ENCODE measurements at regions of chr1 and their contacts with region 1.

Region 1: GRCh38 chr1:206955476-206956451 is 9.5 kb upstream of the PIGR start:
- DNase-seq: no peak
- ATAC-seq: peak; percentile 78
- H3K4me3 ChIP-seq: no peak overlapping the region
- H3K27ac ChIP-seq: peak overlapping the region; percentile 38
- H3K4me1 ChIP-seq: peaks cover 44% of the 10 kb centered on the region
- H3K27me3 ChIP-seq: no peaks in the 10 kb centered on the region
- CTCF ChIP-seq: no peak
- EP300 ChIP-seq: no peak
- POLR2A ChIP-seq: no peak
- RAD21 ChIP-seq: 0 out of 2 replicates have a peak, but pooled peaks have one; percentile 2

Region 2: GRCh38 chr1:206930210-206930798 is 25.5 kb before region 1 on chr1:
- CTCF ChIA-PET with region 1: interaction called, 44 read pairs
- POLR2A ChIA-PET with region 1: interaction called, 13 read pairs
- RAD21 ChIA-PET with region 1: interaction called, 9 read pairs
- SMC1A ChIA-PET with region 1: interaction called, 15 read pairs
- in situ Hi-C with region 1: no loop called
- intact Hi-C with region 1: no loop called
- DNase-seq: peak; percentile 96
- ATAC-seq: peak; percentile 86
- H3K4me3 ChIP-seq: peak overlapping the region; percentile 64
- H3K27ac ChIP-seq: peak overlapping the region; percentile 99
- H3K4me1 ChIP-seq: peaks cover 49% of the 10 kb centered on the region
- H3K27me3 ChIP-seq: no peaks in the 10 kb centered on the region
- CTCF ChIP-seq: no peak
- EP300 ChIP-seq: peak; percentile 93 to 94
- POLR2A ChIP-seq: peak; percentile 84
- RAD21 ChIP-seq: peak; percentile 12; the same call in 1 of the 2 replicates

Region 3: DNA sequence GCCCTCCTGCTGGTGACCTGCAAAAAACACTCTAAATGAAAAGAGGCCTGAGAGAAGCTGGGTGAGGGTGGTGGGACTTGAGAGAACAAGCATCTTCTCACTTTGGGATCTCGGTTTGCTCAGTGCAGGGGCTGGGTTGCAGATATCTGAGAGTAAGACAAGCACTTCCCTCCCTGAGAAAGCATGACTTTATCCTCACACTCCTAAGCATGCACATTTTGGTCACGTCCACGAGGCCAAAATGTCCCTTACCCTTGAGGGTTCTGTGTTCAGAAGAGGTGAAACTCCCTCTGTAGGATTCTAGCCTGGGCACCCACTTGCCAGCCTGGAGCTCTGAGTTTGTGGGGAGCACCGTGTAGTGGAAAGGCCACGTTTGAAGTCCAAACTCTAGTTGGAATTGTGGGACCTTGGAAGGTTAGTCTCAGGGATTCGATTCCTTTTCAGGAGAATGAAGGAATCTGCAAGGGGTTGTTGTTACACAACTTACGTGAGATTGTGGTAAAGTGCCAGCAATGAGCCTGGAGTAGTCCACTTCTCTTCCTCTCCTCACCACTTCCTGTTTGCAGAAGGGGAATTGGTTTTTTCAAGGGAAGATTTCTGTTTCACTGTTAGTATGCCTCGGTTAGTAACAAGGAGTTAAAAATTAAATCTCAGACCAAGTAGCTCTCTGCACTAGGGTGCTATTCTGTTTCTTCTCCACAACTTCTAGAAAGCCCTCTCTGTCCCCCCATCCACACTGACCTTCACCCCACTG is 11.5 kb after region 1 on chr1:
- CTCF ChIA-PET with region 1: interaction called, 26 read pairs
- POLR2A ChIA-PET with region 1: interaction called, 4 read pairs
- RAD21 ChIA-PET with region 1: interaction called, 17 read pairs
- SMC1A ChIA-PET with region 1: interaction called, 14 read pairs
- in situ Hi-C with region 1: no loop called
- intact Hi-C with region 1: no loop called
- DNase-seq: peak; percentile 72
- ATAC-seq: peak; percentile 72
- H3K4me3 ChIP-seq: 0 out of 2 replicates have a peak overlapping the region, but pooled peaks have one; percentile 37
- H3K27ac ChIP-seq: peak overlapping the region; percentile 52
- H3K4me1 ChIP-seq: peaks cover 38% of the 10 kb centered on the region
- H3K27me3 ChIP-seq: no peaks in the 10 kb centered on the region
- CTCF ChIP-seq: no peak
- EP300 ChIP-seq: 0 out of 4 replicates have a peak, but pooled peaks of 1 of the 2 experiments have one; percentile 32
- POLR2A ChIP-seq: no peak
- RAD21 ChIP-seq: no peak

Region 4: GRCh38 chr1:206974140-206974539 is 18.4 kb after region 1 on chr1:
- CTCF ChIA-PET with region 1: interaction called, 61 read pairs
- POLR2A ChIA-PET with region 1: interaction called, 5 read pairs
- RAD21 ChIA-PET with region 1: interaction called, 9 read pairs
- SMC1A ChIA-PET with region 1: interaction called, 14 read pairs
- in situ Hi-C with region 1: no loop called
- intact Hi-C with region 1: no loop called
- DNase-seq: no peak
- ATAC-seq: no peak
- H3K4me3 ChIP-seq: no peak overlapping the region
- H3K27ac ChIP-seq: no peak overlapping the region
- H3K4me1 ChIP-seq: peaks cover 15% of the 10 kb centered on the region
- H3K27me3 ChIP-seq: no peaks in the 10 kb centered on the region
- CTCF ChIP-seq: no peak
- EP300 ChIP-seq: no peak
- POLR2A ChIP-seq: no peak
- RAD21 ChIP-seq: no peak

Measured in GM12878 (cell line).